Activated CD4-positive, alpha-beta T cell treated with anti-CD3 and anti-CD28 coated beads for 36 hours (primary cell): ENCODE measurements at regions of chr10 and their contacts with region 1.

Region 1: DNA sequence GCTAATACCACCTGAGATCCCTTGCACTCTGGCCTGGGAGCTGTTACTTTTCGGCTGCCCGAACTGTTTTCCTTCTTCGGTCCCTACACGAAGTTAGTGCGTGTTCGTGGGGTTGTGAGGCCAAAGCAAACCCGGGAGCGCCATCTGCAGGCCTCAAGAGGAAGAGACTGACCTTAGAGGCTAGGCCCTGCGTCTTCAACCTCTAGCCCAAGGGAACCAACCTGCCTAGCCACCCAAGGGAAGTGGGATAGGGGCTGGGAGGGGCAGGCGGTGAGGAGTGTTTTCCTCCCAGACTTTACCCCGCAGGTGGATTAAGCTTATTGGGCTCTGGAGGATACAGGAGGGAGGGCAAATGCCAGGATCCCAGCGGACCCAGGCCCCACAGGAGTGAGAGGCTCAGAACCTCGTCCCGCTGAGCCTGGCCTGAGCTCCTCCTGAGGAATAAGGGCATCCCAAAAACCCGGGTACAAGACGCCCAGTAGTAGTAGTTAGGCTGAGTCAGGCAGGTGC is 1.7 kb upstream of the PAX2 start:
- DNase-seq: peak; percentile 76
- ATAC-seq: peak; percentile 67
- H3K4me3 Mint-ChIP-seq: no peak overlapping the region
- H3K27ac Mint-ChIP-seq: no peak overlapping the region
- H3K4me1 Mint-ChIP-seq: peaks cover 30% of the 10 kb centered on the region
- H3K27me3 Mint-ChIP-seq: peaks cover 76% of the 10 kb centered on the region

Region 2: DNA sequence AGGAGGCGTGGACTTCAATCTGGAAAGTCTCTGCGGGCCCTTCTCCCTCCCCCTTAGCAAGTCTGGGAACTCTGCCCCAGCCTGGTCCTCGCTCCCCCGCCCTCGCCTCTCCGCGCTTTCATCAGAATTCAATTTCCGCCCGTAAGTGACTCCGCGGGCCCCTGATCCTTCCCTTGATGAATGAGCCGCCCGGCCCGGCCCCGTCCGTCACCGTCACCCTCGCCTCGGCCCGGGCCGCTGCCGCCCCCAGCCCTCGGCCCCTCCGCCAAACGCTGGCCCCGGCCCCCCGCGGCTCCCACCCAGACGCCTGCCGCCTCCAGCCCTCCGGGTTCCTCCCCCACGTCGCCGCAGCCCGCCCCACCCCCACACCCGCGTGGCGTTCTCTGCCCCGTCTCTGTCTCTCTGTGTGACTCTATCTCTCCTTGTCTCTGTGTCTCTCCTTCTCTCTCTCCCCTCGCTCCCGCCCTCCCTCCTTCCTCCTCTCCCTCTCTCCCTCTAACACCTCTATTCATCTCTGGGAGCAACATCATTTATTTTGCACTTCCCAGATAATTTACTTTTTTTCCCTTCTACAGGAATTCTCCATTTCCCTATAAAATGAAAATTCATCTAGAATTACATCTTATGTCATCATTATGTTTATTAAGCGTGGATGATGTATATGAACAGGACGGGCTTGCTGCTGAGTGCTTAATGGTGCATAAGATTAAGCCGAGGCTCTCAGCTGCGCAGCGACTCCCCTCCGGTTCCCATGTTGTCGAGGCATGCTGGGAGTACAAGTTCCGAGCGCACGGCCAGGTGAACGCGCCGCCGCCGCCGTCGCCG is 89.5 kb before region 1 on chr10:
- CTCF ChIA-PET with region 1: no interaction called
- POLR2A ChIA-PET with region 1: no interaction called
- intact Hi-C with region 1: loop called in 1 of 2 experiments (anchors 5 kb)
- DNase-seq: peak; percentile 72
- ATAC-seq: peak; percentile 48
- H3K4me3 Mint-ChIP-seq: peak overlapping the region; percentile 62
- H3K27ac Mint-ChIP-seq: peak overlapping the region; percentile 12
- H3K4me1 Mint-ChIP-seq: peaks cover 20% of the 10 kb centered on the region
- H3K27me3 Mint-ChIP-seq: peaks cover 58% of the 10 kb centered on the region

Region 3: DNA sequence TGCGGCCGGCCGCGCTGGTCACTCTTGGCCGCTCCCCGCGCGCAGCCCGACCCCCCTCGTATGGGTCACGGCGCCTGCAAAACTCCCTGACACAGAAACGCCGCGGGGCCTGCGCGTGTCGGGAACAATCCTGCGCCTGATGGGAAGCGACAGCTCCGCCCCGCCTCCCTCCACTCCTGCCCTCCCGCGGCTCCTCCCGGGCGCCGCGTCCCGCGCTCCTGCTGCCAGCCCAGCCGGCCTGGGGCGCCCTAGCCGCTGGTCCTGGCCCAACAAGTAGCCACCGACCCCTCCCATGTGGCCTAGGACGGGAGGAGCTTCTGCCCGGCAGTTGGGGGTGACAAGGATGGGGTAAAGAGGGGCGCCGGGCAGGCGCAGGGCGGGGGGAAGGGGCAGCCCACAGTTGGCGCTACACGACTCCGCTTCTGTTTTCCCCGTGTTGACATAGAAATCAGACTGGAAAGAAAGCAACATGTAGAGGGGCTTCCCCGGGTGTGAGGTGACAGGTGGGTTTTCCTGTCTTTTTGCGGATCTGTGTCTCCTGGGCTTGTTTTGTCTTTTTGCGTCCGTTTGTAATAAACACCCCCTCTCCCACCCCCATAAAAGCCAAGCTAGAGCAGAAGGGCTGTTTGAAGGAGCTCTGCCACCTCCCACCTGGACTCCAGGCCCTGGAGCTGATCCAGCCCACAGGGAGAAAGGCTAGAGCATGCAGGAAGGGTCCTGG is 33.4 kb before region 1 on chr10:
- CTCF ChIA-PET with region 1: interaction called, 5 read pairs
- POLR2A ChIA-PET with region 1: no interaction called
- intact Hi-C with region 1: loop called (anchors 5 kb)
- DNase-seq: no peak
- ATAC-seq: no peak
- H3K4me3 Mint-ChIP-seq: no peak overlapping the region
- H3K27ac Mint-ChIP-seq: no peak overlapping the region
- H3K4me1 Mint-ChIP-seq: peaks cover 4% of the 10 kb centered on the region
- H3K27me3 Mint-ChIP-seq: peaks cover 69% of the 10 kb centered on the region

Region 4: DNA sequence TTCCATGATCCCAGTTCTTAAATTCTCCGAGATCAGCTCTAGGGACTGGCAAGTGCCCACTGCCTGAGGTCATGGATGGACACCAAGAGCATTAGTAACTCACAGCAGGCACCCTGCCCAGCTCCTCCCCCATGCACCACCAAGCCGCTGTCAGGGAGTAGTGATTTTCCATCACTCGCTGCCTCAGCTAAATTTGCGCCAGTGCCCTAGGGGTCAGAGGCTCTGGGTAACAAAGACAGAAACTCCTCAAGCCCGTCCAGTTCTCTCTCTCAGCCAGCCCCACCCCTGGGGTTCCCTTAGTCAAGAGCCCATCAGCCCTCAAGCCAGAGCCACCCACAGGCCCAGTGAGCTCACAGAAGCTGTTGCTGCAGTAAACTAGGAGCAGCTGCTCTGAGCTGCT is 31.7 kb after region 1 on chr10:
- CTCF ChIA-PET with region 1: no interaction called
- POLR2A ChIA-PET with region 1: no interaction called
- intact Hi-C with region 1: no loop called
- DNase-seq: no peak
- ATAC-seq: no peak
- H3K4me3 Mint-ChIP-seq: no peak overlapping the region
- H3K27ac Mint-ChIP-seq: no peak overlapping the region
- H3K4me1 Mint-ChIP-seq: no peaks in the 10 kb centered on the region
- H3K27me3 Mint-ChIP-seq: peaks cover 28% of the 10 kb centered on the region

Region 5: DNA sequence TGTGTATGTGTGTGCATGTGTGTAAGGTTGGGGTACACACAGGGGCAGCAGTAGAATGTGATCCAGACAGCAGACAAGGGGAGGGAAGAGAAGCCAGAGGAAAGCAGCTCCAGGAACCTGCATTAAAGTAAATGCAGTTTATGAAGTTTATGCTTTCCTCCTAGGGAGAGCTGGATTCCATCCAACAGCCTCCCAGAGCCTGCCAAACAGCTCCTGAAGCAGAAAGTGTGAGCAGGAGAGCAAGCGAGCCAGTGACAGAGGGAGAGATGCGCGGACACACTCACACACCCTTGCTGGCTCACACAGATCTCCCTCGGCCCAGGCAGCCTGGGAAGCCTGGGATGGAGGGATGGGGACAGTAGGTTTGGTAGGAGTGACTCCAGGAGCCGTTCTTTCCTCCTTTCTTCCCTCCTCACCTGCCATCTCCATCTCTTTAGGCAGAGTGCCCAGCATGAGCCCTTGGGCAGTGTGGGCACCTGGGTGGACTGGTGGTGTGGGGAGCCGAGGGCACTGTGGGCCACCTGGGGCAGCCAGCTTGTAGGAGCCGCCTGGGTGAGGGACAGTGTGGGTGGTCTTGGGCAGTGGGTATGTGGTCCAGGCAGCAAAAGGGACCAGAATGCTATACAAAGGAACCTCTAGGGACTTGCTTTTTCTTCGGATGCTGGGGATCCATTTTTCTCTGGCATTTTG is 47.8 kb after region 1 on chr10:
- CTCF ChIA-PET with region 1: no interaction called
- POLR2A ChIA-PET with region 1: no interaction called
- intact Hi-C with region 1: no loop called
- DNase-seq: no peak
- ATAC-seq: no peak
- H3K4me3 Mint-ChIP-seq: no peak overlapping the region
- H3K27ac Mint-ChIP-seq: no peak overlapping the region
- H3K4me1 Mint-ChIP-seq: no peaks in the 10 kb centered on the region
- H3K27me3 Mint-ChIP-seq: peaks cover 28% of the 10 kb centered on the region

Region 6: GRCh38 chr10:100811752-100812750 is 68.4 kb after region 1 on chr10:
- CTCF ChIA-PET with region 1: interaction called, 11 read pairs
- POLR2A ChIA-PET with region 1: no interaction called
- intact Hi-C with region 1: no loop called
- DNase-seq: no peak
- ATAC-seq: no peak
- H3K4me3 Mint-ChIP-seq: no peak overlapping the region
- H3K27ac Mint-ChIP-seq: no peak overlapping the region
- H3K4me1 Mint-ChIP-seq: no peaks in the 10 kb centered on the region
- H3K27me3 Mint-ChIP-seq: peaks cover 43% of the 10 kb centered on the region

Region 7: DNA sequence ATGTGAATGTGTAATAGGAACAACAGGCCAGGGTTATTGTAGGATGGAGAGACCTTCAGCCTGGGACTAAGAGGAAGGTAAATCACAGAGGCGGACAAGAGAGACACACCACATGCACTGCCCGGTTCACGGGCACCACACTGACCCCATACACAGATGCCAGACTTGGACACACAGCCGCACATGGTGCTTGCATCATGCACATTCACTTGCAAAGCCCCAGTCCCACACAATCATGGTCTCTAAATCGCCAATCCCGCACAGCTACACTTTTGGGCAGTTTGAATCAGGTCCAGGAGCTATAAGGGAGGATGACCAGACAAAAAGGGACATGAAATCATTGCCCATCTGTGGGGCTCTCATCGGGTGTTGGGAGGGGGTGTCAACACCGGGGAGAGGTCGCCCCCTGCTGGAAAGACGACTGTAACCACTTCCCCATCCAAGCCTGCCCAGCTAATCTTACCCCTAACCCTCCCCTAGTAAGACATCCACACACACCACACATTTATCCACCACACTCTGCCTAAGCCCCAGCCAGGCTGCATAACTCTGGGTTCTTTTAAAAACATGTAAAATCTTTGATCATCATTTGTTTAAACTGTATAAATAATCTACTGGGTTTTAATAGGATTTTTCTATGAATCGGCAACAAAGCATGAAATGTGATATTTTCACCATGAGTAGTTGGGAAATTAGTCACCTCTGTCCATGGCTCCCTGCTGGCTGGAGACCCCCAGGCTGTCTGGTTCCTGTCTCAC is 128.5 kb after region 1 on chr10:
- CTCF ChIA-PET with region 1: interaction called, 8 read pairs
- POLR2A ChIA-PET with region 1: no interaction called
- intact Hi-C with region 1: loop called (anchors 2 to 5 kb)
- DNase-seq: peak; percentile 89
- ATAC-seq: peak; percentile 97
- H3K4me3 Mint-ChIP-seq: no peak overlapping the region
- H3K27ac Mint-ChIP-seq: no peak overlapping the region
- H3K4me1 Mint-ChIP-seq: no peaks in the 10 kb centered on the region
- H3K27me3 Mint-ChIP-seq: peaks cover 9% of the 10 kb centered on the region

Region 8: GRCh38 chr10:101141616-101142532 is 398.2 kb after region 1 on chr10:
- CTCF ChIA-PET with region 1: interaction called, 6 read pairs
- POLR2A ChIA-PET with region 1: no interaction called
- intact Hi-C with region 1: loop called in 1 of 2 experiments (anchors 5 kb)
- DNase-seq: peak; percentile 91
- ATAC-seq: peak; percentile 90
- H3K4me3 Mint-ChIP-seq: no peak overlapping the region
- H3K27ac Mint-ChIP-seq: no peak overlapping the region
- H3K4me1 Mint-ChIP-seq: peaks cover 19% of the 10 kb centered on the region
- H3K27me3 Mint-ChIP-seq: peaks cover 78% of the 10 kb centered on the region